Cardiac septum (tissue), 1 donor: ENCODE measurements at regions of chrX and their contacts with region 1.

Region 1: DNA sequence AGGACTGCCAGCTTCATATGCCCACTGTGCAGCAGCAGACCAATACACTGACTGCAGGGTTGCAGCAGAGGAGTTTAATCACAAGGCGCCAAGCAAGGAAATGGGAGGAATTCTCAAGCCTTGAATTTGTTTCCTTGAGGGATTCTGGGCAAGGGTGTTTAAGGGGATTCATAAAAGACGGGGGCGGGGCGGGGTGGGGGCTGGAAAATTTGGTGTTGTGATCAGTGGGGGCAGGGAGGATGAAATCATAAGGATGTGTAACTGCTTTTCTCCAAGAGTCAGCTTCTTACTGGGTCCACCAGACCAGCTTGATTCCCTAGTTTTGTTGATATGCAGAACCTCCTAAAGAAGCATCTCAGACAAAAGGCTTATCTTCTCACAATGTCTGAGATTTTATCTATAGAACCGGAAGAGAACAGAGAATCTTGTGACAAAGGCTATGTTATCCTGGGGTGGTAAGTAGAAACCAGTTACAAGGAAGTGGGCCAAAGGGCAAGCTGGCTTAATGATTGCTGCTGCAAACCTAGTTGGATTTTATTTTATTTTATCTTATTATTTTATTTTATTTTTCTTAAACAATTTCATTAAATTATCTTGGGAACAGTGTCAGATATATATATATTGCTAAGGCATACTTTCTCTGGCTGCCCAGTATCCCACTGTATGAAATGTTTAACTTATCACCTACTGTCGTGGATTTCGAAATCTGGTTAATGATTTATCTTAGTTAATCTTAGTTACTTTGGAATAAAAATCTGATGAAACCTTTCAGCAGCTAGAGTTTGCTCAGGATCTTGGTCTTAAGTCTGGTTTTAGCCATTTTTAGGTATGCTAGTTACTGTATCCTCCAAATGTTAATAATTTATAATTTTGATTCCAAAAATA is 276.4 kb downstream of the RPA4 start:
- DNase-seq: no peak

Region 2: DNA sequence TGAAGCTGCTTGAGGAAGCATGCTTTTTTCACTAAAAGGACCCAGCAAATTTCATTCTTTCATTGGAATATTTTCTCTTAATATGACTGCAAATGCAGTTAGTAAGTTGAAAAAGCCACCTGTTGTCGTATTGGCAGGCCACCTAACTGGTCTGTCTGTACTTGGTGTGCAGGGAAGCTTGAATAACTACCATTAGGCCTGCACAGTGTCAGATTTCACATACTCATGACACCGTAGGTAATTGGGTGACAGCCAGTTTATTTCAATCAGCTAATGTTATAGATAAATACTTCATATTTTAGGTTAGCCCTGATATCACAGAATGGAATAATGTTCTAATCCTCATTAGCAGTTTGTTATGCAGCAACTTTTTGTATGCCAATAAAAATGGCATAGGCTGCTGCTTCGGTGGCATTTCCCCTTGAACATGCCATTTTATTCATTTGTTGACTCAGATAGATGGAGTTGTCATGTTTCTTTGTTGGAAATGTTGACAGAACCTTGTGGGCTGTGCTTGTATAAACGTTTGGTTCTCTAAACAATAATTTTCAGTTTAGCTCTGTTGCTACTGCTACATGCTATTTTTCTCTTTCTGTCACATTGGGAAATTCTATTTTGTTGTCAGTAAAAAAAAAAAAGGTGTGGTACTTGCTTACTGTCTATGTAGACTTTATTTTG is 102.7 kb before region 1 on chrX:
- intact Hi-C with region 1: loop called (anchors 10 kb)
- DNase-seq: no peak

Region 3: GRCh38 chrX:97215186-97215585 is 55.0 kb after region 1 on chrX:
- intact Hi-C with region 1: no loop called
- DNase-seq: no peak